Activated B cell treated with CpG ODN at 0.5 μM for 24 hours (primary cell): ENCODE measurements at regions of chr17 and their contacts with region 1.

Region 1: GRCh38 chr17:48047741-48048383 is at the start of gene NFE2L1:
- DNase-seq: peak; percentile 89
- ATAC-seq: peak; percentile 94
- H3K4me3 Mint-ChIP-seq: peak within 1 kb of the TSS; percentile 97
- H3K27ac Mint-ChIP-seq: peak within 1 kb of the TSS; percentile 100
- H3K4me1 Mint-ChIP-seq: peaks cover 62% of the 10 kb centered on the region
- H3K27me3 Mint-ChIP-seq: no peaks in the 10 kb centered on the region
- CTCF ChIP-seq: no peak
- total RNA-seq, gene NFE2L1: 127 and 141 TPM in 2 replicates

Region 2: GRCh38 chr17:47970704-47971463 is 77.0 kb before region 1 on chr17 and contains the start of gene CDK5RAP3:
- CTCF ChIA-PET with region 1: interaction called, 3 read pairs
- POLR2A ChIA-PET with region 1: interaction called, 14 read pairs
- intact Hi-C with region 1: no loop called
- DNase-seq: peak; percentile 98
- ATAC-seq: peak; percentile 99
- H3K4me3 Mint-ChIP-seq: peak within 1 kb of the TSS; percentile 97
- H3K27ac Mint-ChIP-seq: peak within 1 kb of the TSS; percentile 91
- H3K4me1 Mint-ChIP-seq: peaks cover 30% of the 10 kb centered on the region
- H3K27me3 Mint-ChIP-seq: no peaks in the 10 kb centered on the region
- CTCF ChIP-seq: peak; percentile 38
- total RNA-seq, gene CDK5RAP3: 275 and 286 TPM in 2 replicates

Region 3: GRCh38 chr17:48074315-48075081 is 26.6 kb after region 1 on chr17:
- CTCF ChIA-PET with region 1: interaction called, 4 read pairs
- POLR2A ChIA-PET with region 1: interaction called, 9 read pairs
- intact Hi-C with region 1: loop called (anchors 1 kb)
- DNase-seq: peak; percentile 36
- ATAC-seq: peak; percentile 93
- H3K4me3 Mint-ChIP-seq: no peak overlapping the region
- H3K27ac Mint-ChIP-seq: no peak overlapping the region
- H3K4me1 Mint-ChIP-seq: no peaks in the 10 kb centered on the region
- H3K27me3 Mint-ChIP-seq: no peaks in the 10 kb centered on the region
- CTCF ChIP-seq: no peak

Region 4: GRCh38 chr17:48107168-48108132 is 59.6 kb after region 1 on chr17 and contains the start of gene SNX11:
- CTCF ChIA-PET with region 1: interaction called, 3 read pairs
- POLR2A ChIA-PET with region 1: interaction called, 63 read pairs
- intact Hi-C with region 1: loop called (anchors 1 kb)
- DNase-seq: peak; percentile 89
- ATAC-seq: peak; percentile 71
- H3K4me3 Mint-ChIP-seq: peak within 1 kb of the TSS; percentile 99
- H3K27ac Mint-ChIP-seq: peak within 1 kb of the TSS; percentile 97
- H3K4me1 Mint-ChIP-seq: peaks cover 69% of the 10 kb centered on the region
- H3K27me3 Mint-ChIP-seq: no peaks in the 10 kb centered on the region
- CTCF ChIP-seq: no peak
- total RNA-seq, gene SNX11: 129 and 145 TPM in 2 replicates

Region 5: DNA sequence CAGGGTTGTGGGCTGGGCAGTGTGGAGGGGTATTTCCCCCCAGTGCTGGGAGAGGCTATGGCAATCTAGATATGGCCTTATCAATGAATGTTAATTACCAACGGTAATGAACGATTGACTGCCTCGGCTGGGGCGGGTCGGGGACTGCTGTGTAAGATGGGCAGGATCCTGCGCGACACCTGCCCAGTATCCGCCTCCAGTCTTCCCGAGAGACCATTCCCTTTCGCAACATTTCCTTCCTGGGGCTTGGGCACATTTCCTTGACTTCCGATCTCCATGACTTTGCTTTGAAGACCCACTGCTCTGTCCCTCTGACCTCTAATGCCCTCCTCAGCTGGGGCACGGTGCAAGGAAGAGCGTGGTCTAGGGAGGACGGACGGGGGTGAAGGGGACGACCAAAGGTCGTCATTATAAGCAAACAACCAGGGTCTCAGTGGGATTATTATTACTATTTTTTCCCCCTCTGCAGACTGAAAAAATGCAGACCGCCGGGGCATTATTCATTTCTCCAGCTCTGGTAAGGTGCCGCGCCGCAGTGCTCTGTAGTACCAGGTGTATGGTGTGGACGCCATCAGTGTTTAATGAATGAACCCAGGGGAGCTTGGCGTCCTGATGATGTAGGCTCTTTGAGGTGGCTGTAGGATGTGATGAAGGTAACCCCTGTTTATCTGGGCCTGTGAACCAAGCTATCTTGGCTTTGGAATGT is 845.2 kb after region 1 on chr17:
- CTCF ChIA-PET with region 1: no interaction called
- POLR2A ChIA-PET with region 1: interaction called, 5 read pairs
- intact Hi-C with region 1: loop called (anchors 1 kb)
- DNase-seq: no peak
- ATAC-seq: no peak
- H3K4me3 Mint-ChIP-seq: peak overlapping the region; percentile 94
- H3K27ac Mint-ChIP-seq: peak overlapping the region; percentile 94
- H3K4me1 Mint-ChIP-seq: peaks cover 34% of the 10 kb centered on the region
- H3K27me3 Mint-ChIP-seq: no peaks in the 10 kb centered on the region
- CTCF ChIP-seq: no peak